ENCODE measurements at regions of chr1 and their contacts with region 1.

Region 1: GRCh38 chr1:24364975-24365678 is 46.0 kb downstream of the GRHL3 start:
- DNase-seq: peak; percentile 38
- H3K4me3 Mint-ChIP-seq: peak overlapping the region; percentile 39
- H3K27ac Mint-ChIP-seq: peak overlapping the region; percentile 73
- H3K4me1 Mint-ChIP-seq: peaks cover 40% of the 10 kb centered on the region
- H3K27me3 Mint-ChIP-seq: no peaks in the 10 kb centered on the region

Region 2: DNA sequence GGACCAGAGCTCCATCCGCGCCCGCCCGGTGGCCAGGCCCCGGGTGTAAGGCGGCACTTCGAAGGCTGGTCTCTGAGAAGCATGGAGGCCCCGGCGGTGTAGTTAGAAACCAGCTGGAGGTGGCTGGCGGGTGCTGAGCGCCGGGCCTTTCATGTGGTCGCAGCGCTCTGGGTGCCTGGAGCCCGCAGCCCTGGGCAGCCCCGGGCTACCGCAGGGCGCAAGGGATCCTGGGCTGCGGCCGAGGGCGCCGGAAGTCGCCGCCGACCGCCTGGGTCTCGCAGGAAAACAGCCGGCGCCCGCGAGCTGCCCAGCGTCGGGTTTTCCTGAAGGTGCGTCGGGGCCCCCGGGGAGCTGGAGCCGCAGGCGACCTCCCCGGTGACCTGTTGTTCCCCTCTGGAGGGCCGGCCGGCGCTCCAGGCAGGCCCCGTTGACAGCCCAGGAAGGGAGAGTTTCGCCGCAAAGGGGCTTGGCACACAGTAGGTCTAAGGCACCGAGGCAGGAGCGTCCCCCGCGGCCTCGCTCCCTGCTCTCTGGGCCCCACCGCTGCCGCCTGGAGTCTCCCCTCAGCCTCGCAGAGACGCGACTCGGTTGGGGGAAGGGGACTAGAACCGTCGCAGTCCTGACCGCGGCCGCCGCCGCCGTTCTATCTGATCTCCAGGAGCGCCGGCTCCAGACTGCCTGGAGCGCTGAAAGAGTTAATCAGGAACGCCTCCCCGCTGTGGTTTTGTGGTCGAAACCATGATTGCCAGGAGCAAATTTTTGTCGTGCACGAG is 43.2 kb before region 1 on chr1:
- intact Hi-C with region 1: loop called (anchors 1 kb)
- DNase-seq: peak; percentile 71
- H3K4me3 Mint-ChIP-seq: peak overlapping the region; percentile 65
- H3K27ac Mint-ChIP-seq: peak overlapping the region; percentile 71
- H3K4me1 Mint-ChIP-seq: peaks cover 48% of the 10 kb centered on the region
- H3K27me3 Mint-ChIP-seq: peaks cover 94% of the 10 kb centered on the region

Measured in activated T-helper 1 cell treated with anti-CD3 and anti-CD28 coated beads, Interleukin-12 subunit alpha, Interleukin-12 subunit beta, Interleukin-2, Interleukin-4 antibody, amounts not matched to agents 30 ng/mL and 10 ng/mL and 1 ng/mL, durations not matched to agents 14 hours and 24 hours and 36 hours (primary cell).